ENCODE measurements at regions of chr17 and their contacts with region 1.

Region 1: DNA sequence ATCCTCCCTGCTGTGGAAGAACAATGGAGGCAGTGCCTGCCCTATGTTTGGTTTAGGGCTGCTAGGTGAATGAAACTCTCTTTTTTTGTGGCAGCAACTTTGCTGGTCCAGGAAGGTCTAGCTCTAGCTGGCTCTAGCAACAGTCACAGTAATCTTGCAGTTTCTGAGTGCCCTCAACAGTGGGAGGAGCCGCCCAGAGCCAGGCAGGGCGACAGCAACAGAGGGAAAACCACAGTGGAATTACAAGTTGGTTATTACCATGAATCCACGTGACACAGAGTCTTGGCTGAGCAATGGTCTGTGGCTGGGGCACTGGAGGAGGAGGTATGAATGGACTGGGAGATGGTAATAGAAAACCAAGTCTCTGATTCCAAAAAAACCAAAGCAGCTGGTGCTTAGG is 10.3 kb downstream of the HSPB9 start:
- DNase-seq: peak; percentile 69
- H3K4me3 Mint-ChIP-seq: no peak overlapping the region
- H3K27ac Mint-ChIP-seq: peak overlapping the region; percentile 77
- H3K4me1 Mint-ChIP-seq: peaks cover 58% of the 10 kb centered on the region
- H3K27me3 Mint-ChIP-seq: no peaks in the 10 kb centered on the region

Region 2: GRCh38 chr17:41738077-41738735 is 394.7 kb before region 1 on chr17:
- CTCF ChIA-PET with region 1: no interaction called
- POLR2A ChIA-PET with region 1: no interaction called
- intact Hi-C with region 1: no loop called
- DNase-seq: peak; percentile 89
- H3K4me3 Mint-ChIP-seq: no peak overlapping the region
- H3K27ac Mint-ChIP-seq: no peak overlapping the region
- H3K4me1 Mint-ChIP-seq: peaks cover 5% of the 10 kb centered on the region
- H3K27me3 Mint-ChIP-seq: peaks cover 28% of the 10 kb centered on the region

Region 3: GRCh38 chr17:42094375-42095069 is 38.4 kb before region 1 on chr17:
- CTCF ChIA-PET with region 1: no interaction called
- POLR2A ChIA-PET with region 1: no interaction called
- intact Hi-C with region 1: no loop called
- DNase-seq: no peak
- H3K4me3 Mint-ChIP-seq: no peak overlapping the region
- H3K27ac Mint-ChIP-seq: no peak overlapping the region
- H3K4me1 Mint-ChIP-seq: peaks cover 8% of the 10 kb centered on the region
- H3K27me3 Mint-ChIP-seq: peaks cover 21% of the 10 kb centered on the region

Region 4: GRCh38 chr17:42120770-42121769 is 11.9 kb before region 1 on chr17 and contains the start of gene KAT2A:
- CTCF ChIA-PET with region 1: interaction called, 11 read pairs
- POLR2A ChIA-PET with region 1: interaction called, 3 read pairs
- intact Hi-C with region 1: no loop called
- DNase-seq: peak; percentile 85
- H3K4me3 Mint-ChIP-seq: peak within 1 kb of the TSS; percentile 56
- H3K27ac Mint-ChIP-seq: peak within 1 kb of the TSS; percentile 51
- H3K4me1 Mint-ChIP-seq: peaks cover 31% of the 10 kb centered on the region
- H3K27me3 Mint-ChIP-seq: no peaks in the 10 kb centered on the region
- total RNA-seq, gene KAT2A: 38.6 to 41.0 TPM

Region 5: GRCh38 chr17:42153919-42154742 is 21.2 kb after region 1 on chr17:
- CTCF ChIA-PET with region 1: interaction called, 3 read pairs
- POLR2A ChIA-PET with region 1: interaction called, 3 read pairs
- intact Hi-C with region 1: loop called (anchors 2 kb)
- DNase-seq: peak; percentile 20
- H3K4me3 Mint-ChIP-seq: peak overlapping the region; percentile 86
- H3K27ac Mint-ChIP-seq: peak overlapping the region; percentile 80
- H3K4me1 Mint-ChIP-seq: peaks cover 34% of the 10 kb centered on the region
- H3K27me3 Mint-ChIP-seq: no peaks in the 10 kb centered on the region

Measured in activated CD4-positive, alpha-beta memory T cell treated with anti-CD3 and anti-CD28 coated beads for 36 hours (primary cell).